ENCODE measurements at regions of chr1 and their contacts with region 1.

Region 1: DNA sequence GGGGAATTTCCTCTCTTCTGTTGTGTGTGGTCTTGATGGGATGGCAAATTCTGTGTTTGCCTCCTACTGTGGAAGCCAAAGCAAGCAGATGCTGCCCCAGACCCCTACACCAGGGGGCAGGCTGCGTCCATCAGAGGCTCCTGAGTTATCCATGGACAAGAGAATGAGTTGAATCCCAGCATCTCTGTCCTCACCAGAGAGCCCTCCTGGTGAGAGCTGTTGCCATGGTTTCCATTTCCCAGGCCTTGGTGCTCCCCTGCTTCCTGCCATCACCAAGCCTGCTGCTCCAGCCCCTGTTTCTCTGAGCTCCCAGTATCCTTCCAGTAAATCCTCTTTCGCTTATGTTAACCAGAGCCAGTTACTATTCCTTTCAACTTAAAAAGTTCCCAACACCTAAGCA is 20.4 kb upstream of the GNG12 start:
- DNase-seq: peak; percentile 62
- H3K4me3 ChIP-seq: no peak overlapping the region
- H3K27ac ChIP-seq: no peak overlapping the region
- H3K4me1 ChIP-seq: peaks cover 4% of the 10 kb centered on the region
- H3K27me3 ChIP-seq: no peaks in the 10 kb centered on the region
- CTCF ChIP-seq: peak; percentile 63

Region 2: GRCh38 chr1:67535474-67535873 is 318.2 kb before region 1 on chr1:
- intact Hi-C with region 1: loop called (anchors 10 kb)
- DNase-seq: peak; percentile 87
- H3K4me3 ChIP-seq: no peak overlapping the region
- H3K27ac ChIP-seq: no peak overlapping the region
- H3K4me1 ChIP-seq: peaks cover 6% of the 10 kb centered on the region
- H3K27me3 ChIP-seq: no peaks in the 10 kb centered on the region
- CTCF ChIP-seq: peak; percentile 85

Region 3: GRCh38 chr1:67710417-67710816 is 143.3 kb before region 1 on chr1:
- intact Hi-C with region 1: no loop called
- DNase-seq: no peak
- H3K4me3 ChIP-seq: no peak overlapping the region
- H3K27ac ChIP-seq: peak overlapping the region; percentile 76
- H3K4me1 ChIP-seq: peaks cover 13% of the 10 kb centered on the region
- H3K27me3 ChIP-seq: no peaks in the 10 kb centered on the region
- CTCF ChIP-seq: no peak

Region 4: GRCh38 chr1:67735806-67736627 is 117.7 kb before region 1 on chr1:
- intact Hi-C with region 1: no loop called
- DNase-seq: peak; percentile 85
- H3K4me3 ChIP-seq: no peak overlapping the region
- H3K27ac ChIP-seq: peak overlapping the region; percentile 89
- H3K4me1 ChIP-seq: peaks cover 15% of the 10 kb centered on the region
- H3K27me3 ChIP-seq: no peaks in the 10 kb centered on the region
- CTCF ChIP-seq: no peak

Region 5: GRCh38 chr1:68010090-68010489 is 156.4 kb after region 1 on chr1:
- intact Hi-C with region 1: loop called (anchors 10 kb)
- DNase-seq: no peak
- H3K4me3 ChIP-seq: no peak overlapping the region
- H3K27ac ChIP-seq: no peak overlapping the region
- H3K4me1 ChIP-seq: no peaks in the 10 kb centered on the region
- H3K27me3 ChIP-seq: no peaks in the 10 kb centered on the region
- CTCF ChIP-seq: no peak

Region 6: GRCh38 chr1:68111519-68112436 is 258.1 kb after region 1 on chr1:
- intact Hi-C with region 1: loop called (anchors 2 kb)
- DNase-seq: peak; percentile 58
- H3K4me3 ChIP-seq: no peak overlapping the region
- H3K27ac ChIP-seq: no peak overlapping the region
- H3K4me1 ChIP-seq: peaks cover 5% of the 10 kb centered on the region
- H3K27me3 ChIP-seq: no peaks in the 10 kb centered on the region
- CTCF ChIP-seq: peak; percentile 44

Region 7: DNA sequence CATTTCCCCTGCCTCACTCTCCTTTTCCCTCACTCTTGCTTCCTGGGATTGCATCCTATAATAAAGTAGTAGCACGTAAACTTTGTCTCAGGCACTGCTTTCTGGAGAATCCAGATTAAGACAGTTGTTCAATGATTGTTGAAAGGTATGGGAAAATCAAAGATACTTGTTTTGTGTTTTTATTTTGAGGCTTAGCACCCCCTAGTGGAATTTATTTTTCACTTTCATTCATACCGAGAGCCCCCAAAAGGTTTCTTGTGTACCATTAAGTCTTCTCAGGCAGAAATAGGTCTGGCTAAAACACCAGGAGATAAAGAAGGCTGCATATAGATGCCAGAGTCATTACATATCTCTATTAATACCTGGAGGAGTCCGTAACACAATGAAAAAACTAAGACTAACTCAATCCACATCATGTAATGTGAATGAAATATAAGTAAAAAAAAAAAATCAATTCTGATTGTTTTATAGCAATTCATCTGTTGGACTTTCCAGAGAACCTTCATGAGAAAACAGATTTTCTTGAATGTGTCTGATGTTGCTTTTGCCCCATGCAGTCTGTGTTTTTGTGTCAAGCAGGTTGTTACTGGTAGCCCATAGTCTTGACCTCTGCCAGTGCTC is 492.6 kb after region 1 on chr1:
- intact Hi-C with region 1: loop called (anchors 5 kb)
- DNase-seq: no peak
- H3K4me3 ChIP-seq: no peak overlapping the region
- H3K27ac ChIP-seq: no peak overlapping the region
- H3K4me1 ChIP-seq: no peaks in the 10 kb centered on the region
- H3K27me3 ChIP-seq: no peaks in the 10 kb centered on the region
- CTCF ChIP-seq: peak; percentile 45